ENCODE measurements at regions of chr15 and their contacts with region 1.

Region 1: DNA sequence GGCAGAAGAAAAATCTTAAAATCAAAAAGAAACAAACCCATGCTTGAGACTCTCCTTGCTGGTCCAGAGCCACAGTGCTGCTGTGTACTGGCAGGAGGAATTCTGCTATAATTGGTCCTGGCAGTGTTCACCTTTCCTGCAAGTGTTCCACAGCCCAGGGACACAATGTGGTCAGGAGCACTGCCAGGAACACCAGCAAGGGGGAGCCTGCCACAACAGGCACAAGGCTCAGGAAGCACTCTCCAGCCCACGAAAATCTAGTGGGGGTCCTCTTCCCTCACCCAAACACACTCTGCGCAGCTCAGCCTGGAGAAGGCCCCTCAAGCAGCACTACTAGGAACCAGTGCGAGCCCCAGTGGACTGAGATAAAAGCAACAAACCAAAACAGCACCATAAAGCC is 92.9 kb downstream of the UBE3A start:
- DNase-seq: peak; percentile 52 to 72
- ATAC-seq: peak; percentile 88 to 100 (median 98)
- H3K4me3 ChIP-seq: no peak overlapping the region
- H3K27ac ChIP-seq: peak overlapping the region in 9 of 10 donors; percentile 5 to 67 (median 55)
- H3K4me1 ChIP-seq: peaks cover 0 to 23% (median 3%) of the 10 kb centered on the region in 9 donors
- H3K27me3 ChIP-seq: no peaks in the 10 kb centered on the region
- CTCF ChIP-seq: peak; percentile 6 to 60 (median 43)

Region 2: DNA sequence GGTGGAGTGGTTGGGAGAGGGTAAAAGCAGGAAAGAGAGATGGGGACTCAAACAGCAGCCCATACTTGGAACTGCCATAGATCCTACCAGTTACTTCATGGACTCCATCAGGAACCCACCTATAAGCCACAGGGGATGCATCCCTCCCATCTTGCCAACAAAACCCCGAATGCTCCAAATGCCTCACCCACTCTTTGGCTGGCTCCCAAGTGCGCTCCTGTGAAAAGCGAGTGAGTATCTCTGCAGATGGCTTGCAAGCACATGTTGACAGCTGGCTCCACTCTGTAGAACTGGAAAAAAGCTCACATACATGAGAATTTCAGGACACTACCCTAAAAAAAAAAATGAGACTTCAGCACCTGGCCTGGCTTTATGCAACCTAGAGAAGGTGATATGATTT is 58.1 kb before region 1 on chr15:
- intact Hi-C with region 1: no loop called
- DNase-seq: no peak
- ATAC-seq: no peak
- H3K4me3 ChIP-seq: no peak overlapping the region
- H3K27ac ChIP-seq: no peak overlapping the region
- H3K4me1 ChIP-seq: no peaks in the 10 kb centered on the region
- H3K27me3 ChIP-seq: no peaks in the 10 kb centered on the region
- CTCF ChIP-seq: no peak

Region 3: GRCh38 chr15:25397100-25397499 is 51.2 kb after region 1 on chr15:
- intact Hi-C with region 1: loop called in 2 of 10 experiments (anchors 5 to 10 kb)
- DNase-seq: no peak
- ATAC-seq: no peak
- H3K4me3 ChIP-seq: no peak overlapping the region
- H3K27ac ChIP-seq: no peak overlapping the region
- H3K4me1 ChIP-seq: peaks cover 0 to 64% (median 20%) of the 10 kb centered on the region in 9 donors
- H3K27me3 ChIP-seq: no peaks in the 10 kb centered on the region
- CTCF ChIP-seq: no peak

Region 4: DNA sequence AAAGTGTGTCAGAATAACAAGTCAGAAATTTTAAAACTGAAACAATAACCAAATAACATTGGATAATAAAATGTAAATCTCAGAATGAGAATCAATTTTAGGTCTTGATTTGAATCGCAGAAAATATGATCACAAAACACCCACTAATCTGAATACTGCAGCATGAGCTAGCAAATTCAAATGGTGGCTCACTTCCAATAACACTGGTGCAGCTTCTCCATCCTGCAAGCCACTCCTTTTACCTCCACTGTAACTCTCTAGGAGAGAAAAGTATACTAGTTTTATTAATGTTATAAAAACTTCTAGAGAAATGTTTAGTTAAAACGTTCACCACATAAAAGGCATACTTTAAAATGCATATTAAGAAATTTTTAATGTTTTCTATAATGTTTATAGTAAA is 62.5 kb after region 1 on chr15:
- intact Hi-C with region 1: loop called in 2 of 10 experiments (anchors 5 to 10 kb)
- DNase-seq: no peak
- ATAC-seq: peak in 3 of 8 donors; percentile 70 to 72 (median 70)
- H3K4me3 ChIP-seq: no peak overlapping the region
- H3K27ac ChIP-seq: peak overlapping the region in 1 of 10 donors; percentile 12
- H3K4me1 ChIP-seq: peaks cover 3 to 74% (median 51%) of the 10 kb centered on the region in 9 donors
- H3K27me3 ChIP-seq: no peaks in the 10 kb centered on the region
- CTCF ChIP-seq: no peak

Region 5: DNA sequence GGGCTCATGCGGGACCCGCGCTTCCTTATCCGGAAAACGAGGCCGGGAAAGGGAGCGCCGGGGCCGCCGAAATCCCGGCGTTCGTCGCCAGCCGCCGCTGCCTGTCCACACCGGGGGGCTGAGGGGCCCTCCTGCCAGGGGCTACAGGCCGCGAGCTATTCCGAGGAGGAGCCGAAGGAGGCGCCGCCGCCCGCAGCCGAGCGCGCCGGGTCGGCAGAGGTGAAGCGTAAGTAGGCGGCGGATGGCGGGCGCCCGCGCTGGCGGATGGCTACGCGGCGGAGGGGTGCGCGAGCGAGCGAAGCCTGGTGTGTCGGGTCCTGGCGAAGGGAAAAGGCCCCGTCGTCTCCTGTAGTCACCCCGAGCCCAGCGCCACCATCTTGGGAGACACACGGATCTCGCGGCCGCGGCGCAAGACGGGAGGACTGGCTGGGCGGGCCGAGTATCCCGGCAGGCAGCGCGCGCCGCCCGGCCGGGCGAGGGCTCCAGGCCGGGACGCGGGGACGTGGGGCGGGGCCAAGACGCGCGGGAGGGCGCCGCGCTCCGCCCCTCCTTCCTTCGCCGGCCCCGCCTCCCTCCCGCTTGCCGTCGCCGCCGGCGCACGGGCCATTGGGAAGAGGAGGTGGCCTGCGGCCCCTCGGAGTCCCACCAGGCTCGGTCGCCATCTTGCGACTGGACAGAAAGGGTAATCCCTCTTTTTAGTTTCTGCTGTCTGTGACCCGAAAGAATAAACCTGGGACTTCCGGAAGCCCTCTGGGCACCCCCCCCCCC is 92.8 kb after region 1 on chr15 and contains the start of gene UBE3A:
- intact Hi-C with region 1: loop called in 7 of 10 experiments (anchors 5 to 10 kb)
- DNase-seq: peak; percentile 89 to 94
- ATAC-seq: peak; percentile 97 to 99 (median 98)
- H3K4me3 ChIP-seq: peak within 1 kb of the TSS; percentile 71 to 100 (median 94)
- H3K27ac ChIP-seq: peak within 1 kb of the TSS; percentile 95 to 100 (median 99)
- H3K4me1 ChIP-seq: peaks cover 3 to 42% (median 30%) of the 10 kb centered on the region in 9 donors
- H3K27me3 ChIP-seq: no peaks in the 10 kb centered on the region
- CTCF ChIP-seq: peak in 7 of 9 donors; percentile 9 to 50 (median 32)
- total RNA-seq, gene UBE3A: 101 to 146 (median 112) TPM

Region 6: GRCh38 chr15:26051761-26052675 is 706.1 kb after region 1 on chr15:
- intact Hi-C with region 1: no loop called
- DNase-seq: no peak
- ATAC-seq: peak in 5 of 8 donors; percentile 37 to 76 (median 67)
- H3K4me3 ChIP-seq: no peak overlapping the region
- H3K27ac ChIP-seq: no peak overlapping the region
- H3K4me1 ChIP-seq: no peaks in the 10 kb centered on the region
- H3K27me3 ChIP-seq: peaks cover 0 to 11% (median 5%) of the 10 kb centered on the region in 7 donors
- CTCF ChIP-seq: no peak